Common myeloid progenitor, CD34-positive (primary cell): ENCODE measurements at regions of chr11 and their contacts with region 1.

Region 1: DNA sequence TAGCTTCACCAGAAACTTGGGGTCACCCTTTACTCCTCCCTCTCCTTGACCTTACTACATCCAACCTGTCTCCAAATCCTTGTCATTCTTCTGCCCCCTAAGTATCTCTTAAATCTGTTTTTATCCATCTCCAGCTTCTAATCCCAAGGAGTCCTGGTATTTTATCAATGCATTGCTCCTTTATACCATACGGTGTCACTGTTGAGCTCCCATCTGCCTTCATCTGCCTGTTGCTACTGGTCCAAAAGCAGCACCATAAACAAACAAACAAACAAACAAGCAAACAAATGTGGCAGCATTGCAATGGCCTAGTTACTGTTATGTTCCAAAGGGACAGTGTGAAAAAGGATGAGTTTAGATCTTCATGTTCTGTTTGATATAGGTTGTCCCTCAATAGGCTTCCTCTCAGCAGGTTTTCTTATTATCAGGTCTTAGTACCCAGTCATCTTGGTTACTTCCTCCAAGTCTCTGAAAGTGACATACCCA is 34.2 kb downstream of the DNHD1 start:
- DNase-seq: peak; percentile 54 to 64 (median 62)
- H3K4me3 ChIP-seq: no peak overlapping the region
- H3K27ac ChIP-seq: no peak overlapping the region
- H3K4me1 ChIP-seq: no peaks in the 10 kb centered on the region
- H3K27me3 ChIP-seq: no peaks in the 10 kb centered on the region

Region 2: GRCh38 chr11:6414874-6415328 is 116.4 kb before region 1 on chr11:
- CTCF ChIA-PET with region 1: no interaction called
- POLR2A ChIA-PET with region 1: no interaction called
- DNase-seq: no peak
- H3K4me3 ChIP-seq: no peak overlapping the region
- H3K27ac ChIP-seq: no peak overlapping the region
- H3K4me1 ChIP-seq: peaks cover 3 to 18% (median 11%) of the 10 kb centered on the region in 4 experiments
- H3K27me3 ChIP-seq: peaks cover 0 to 20% (median 0%) of the 10 kb centered on the region in 5 experiments

Region 3: GRCh38 chr11:6619004-6619745 is 87.9 kb after region 1 on chr11 and contains the start of gene TPP1:
- CTCF ChIA-PET with region 1: interaction called, 16 read pairs
- POLR2A ChIA-PET with region 1: no interaction called
- DNase-seq: peak; percentile 91 to 93 (median 92)
- H3K4me3 ChIP-seq: peak within 1 kb of the TSS; percentile 71 to 94 (median 88)
- H3K27ac ChIP-seq: peak within 1 kb of the TSS; percentile 82 to 96
- H3K4me1 ChIP-seq: peaks cover 9 to 33% (median 26%) of the 10 kb centered on the region in 4 experiments
- H3K27me3 ChIP-seq: no peaks in the 10 kb centered on the region

Region 4: DNA sequence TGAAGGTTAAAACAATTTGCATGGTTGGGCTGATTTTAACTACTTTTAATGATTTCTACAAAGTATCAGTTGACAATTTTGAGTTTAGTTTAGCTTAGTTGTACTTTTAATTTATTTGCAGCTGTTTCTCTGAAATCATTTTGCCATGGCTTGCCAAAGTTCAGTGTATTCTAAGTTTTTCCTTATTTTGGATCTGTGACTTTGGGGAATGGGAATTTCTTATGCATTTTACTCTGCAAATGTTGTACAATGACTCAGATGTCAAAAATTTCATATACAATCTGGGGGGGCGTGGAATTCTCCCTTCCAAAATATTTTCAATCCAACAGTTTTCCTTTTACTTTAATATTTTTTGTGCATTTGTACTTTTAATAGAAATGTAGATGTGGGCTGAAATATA is 133.2 kb after region 1 on chr11:
- CTCF ChIA-PET with region 1: interaction called, 11 read pairs
- POLR2A ChIA-PET with region 1: interaction called, 3 read pairs
- DNase-seq: no peak
- H3K4me3 ChIP-seq: no peak overlapping the region
- H3K27ac ChIP-seq: no peak overlapping the region
- H3K4me1 ChIP-seq: no peaks in the 10 kb centered on the region
- H3K27me3 ChIP-seq: no peaks in the 10 kb centered on the region

Region 5: DNA sequence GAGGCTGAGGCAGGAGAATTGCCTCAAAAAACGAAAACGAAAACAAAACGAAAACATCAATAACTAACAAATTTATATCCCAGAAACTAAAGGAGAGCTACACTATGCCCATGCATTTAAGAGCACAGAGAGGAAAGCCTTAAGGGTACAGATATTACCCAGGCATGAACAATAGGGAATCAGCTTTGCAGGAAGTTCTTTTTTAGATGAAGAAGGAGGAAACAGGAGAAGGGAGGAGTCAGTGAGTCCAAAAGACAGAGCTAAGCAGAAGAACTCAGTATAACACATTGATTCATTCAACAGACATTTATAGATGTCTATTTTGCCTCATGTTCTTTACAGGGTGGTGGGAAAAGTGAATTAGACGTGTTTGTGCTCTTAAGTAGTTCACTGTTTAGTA is 143.6 kb after region 1 on chr11:
- CTCF ChIA-PET with region 1: interaction called, 16 read pairs
- POLR2A ChIA-PET with region 1: interaction called, 3 read pairs
- DNase-seq: no peak
- H3K4me3 ChIP-seq: no peak overlapping the region
- H3K27ac ChIP-seq: no peak overlapping the region
- H3K4me1 ChIP-seq: peaks cover 0 to 32% (median 5%) of the 10 kb centered on the region in 4 experiments
- H3K27me3 ChIP-seq: no peaks in the 10 kb centered on the region

Region 6: GRCh38 chr11:6682936-6683861 is 151.9 kb after region 1 on chr11 and contains the start of gene MRPL17:
- CTCF ChIA-PET with region 1: interaction called, 31 read pairs
- POLR2A ChIA-PET with region 1: no interaction called
- DNase-seq: peak; percentile 99 to 100 (median 99)
- H3K4me3 ChIP-seq: peak within 1 kb of the TSS; percentile 51 to 99 (median 96)
- H3K27ac ChIP-seq: peak within 1 kb of the TSS; percentile 77 to 90
- H3K4me1 ChIP-seq: peaks cover 7 to 23% (median 18%) of the 10 kb centered on the region in 4 experiments
- H3K27me3 ChIP-seq: no peaks in the 10 kb centered on the region

Region 7: DNA sequence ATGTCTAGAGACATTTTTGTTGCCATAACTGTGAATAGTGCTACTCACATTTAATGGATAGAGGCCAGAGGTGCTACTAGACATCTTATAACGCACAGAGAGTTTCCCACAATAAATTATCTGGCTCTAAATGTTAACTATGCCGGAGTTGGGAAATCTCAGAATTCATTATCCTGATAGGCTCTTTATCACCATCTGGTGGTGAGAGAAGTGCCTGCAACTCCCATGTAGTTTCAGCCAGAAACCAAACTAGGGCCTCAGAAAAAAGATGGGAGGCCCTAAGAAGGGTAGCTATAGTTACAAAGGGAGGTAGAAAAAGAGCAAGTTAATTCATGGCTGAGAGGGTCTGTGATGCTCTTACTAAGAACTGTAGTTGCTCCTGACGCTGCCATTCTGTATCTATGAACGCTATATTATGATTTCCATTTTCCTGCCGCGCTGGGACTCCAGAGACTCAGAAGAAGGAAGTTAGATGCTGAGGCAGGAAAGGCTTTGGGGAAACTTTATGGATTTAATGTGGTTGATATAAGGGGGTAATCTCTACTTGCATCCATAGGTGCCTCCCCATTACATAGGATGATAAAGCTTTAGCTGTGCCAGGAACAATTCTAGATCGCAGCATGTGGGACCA is 174.7 kb after region 1 on chr11:
- CTCF ChIA-PET with region 1: interaction called, 12 read pairs
- POLR2A ChIA-PET with region 1: interaction called, 4 read pairs
- DNase-seq: peak; percentile 43 to 68 (median 57)
- H3K4me3 ChIP-seq: no peak overlapping the region
- H3K27ac ChIP-seq: no peak overlapping the region
- H3K4me1 ChIP-seq: peaks cover 0 to 2% (median 0%) of the 10 kb centered on the region in 4 experiments
- H3K27me3 ChIP-seq: no peaks in the 10 kb centered on the region